ENCODE measurements at regions of chr1 and their contacts with region 1.

Region 1: DNA sequence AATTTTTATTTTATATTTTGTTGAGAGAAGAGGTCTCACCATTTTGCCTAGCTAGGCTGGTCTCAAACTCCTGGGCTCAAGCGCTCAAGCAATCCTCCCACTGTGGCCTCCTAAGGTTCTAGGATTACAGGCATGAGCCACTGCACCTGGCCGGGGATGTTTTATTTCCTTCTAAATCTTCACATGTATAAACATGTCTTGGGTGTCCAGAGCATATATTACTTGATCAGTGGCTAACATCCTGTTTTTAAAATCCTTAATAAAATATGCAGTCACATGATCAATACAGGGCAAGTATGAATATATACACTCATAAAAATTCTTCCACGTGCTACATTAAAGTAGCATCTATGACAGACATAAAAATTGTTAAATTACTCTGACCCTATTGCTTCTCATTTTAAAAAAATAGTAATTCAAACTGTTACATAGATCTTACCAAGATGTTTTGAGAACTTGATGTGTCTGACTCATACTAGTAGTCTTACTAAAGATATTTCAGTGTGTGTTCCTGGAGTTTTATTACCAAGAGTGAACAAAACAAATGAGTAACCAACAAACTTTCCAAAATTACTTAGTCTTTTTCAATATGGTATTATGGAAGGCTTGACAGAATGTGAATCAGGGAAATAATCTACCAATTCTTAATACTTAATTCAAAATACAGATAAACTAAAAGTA is 222.5 kb downstream of the SLC45A1 start:
- DNase-seq: no peak
- ATAC-seq: peak; percentile 84
- H3K4me3 Mint-ChIP-seq: no peak overlapping the region
- H3K27ac Mint-ChIP-seq: peak overlapping the region; percentile 80
- H3K4me1 Mint-ChIP-seq: peaks cover 32% of the 10 kb centered on the region
- H3K27me3 Mint-ChIP-seq: no peaks in the 10 kb centered on the region

Region 2: DNA sequence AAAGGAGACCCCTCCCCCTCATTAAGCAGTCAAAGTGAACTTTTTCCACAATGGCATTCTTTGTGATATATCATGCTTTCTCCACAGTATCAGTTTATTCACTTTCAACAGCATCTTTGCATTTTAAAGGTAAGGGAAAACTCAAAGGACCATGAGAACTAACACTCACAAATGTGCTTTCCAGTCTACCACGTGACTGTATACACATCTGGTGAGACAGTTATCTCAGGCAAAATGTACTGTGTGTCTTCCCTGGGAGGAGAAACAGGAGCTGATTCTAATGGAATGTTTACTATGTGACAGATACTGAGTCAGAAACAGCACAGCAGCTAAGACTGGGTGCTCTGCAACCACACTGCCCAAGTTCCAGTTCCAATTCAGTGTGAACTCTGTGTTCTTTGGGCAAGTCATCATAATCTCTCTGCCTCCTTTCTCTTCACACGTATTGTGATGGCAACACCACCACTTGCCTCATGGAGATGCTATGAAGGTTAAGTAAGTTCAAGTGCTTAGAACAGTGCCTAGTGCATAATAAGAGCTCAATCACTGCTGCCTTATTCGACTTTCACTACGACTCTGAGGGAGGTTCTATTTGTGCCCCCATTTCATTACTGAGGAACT is 143.5 kb before region 1 on chr1:
- CTCF ChIA-PET with region 1: no interaction called
- POLR2A ChIA-PET with region 1: no interaction called
- intact Hi-C with region 1: loop called in 1 of 2 experiments (anchors 1 kb)
- DNase-seq: peak; percentile 68
- ATAC-seq: peak; percentile 84
- H3K4me3 Mint-ChIP-seq: peak overlapping the region; percentile 25
- H3K27ac Mint-ChIP-seq: peak overlapping the region; percentile 81
- H3K4me1 Mint-ChIP-seq: peaks cover 72% of the 10 kb centered on the region
- H3K27me3 Mint-ChIP-seq: no peaks in the 10 kb centered on the region

Region 3: GRCh38 chr1:8486047-8486446 is 54.4 kb before region 1 on chr1:
- CTCF ChIA-PET with region 1: no interaction called
- POLR2A ChIA-PET with region 1: no interaction called
- intact Hi-C with region 1: no loop called
- DNase-seq: no peak
- ATAC-seq: no peak
- H3K4me3 Mint-ChIP-seq: no peak overlapping the region
- H3K27ac Mint-ChIP-seq: no peak overlapping the region
- H3K4me1 Mint-ChIP-seq: peaks cover 3% of the 10 kb centered on the region
- H3K27me3 Mint-ChIP-seq: no peaks in the 10 kb centered on the region

Region 4: GRCh38 chr1:8497210-8497801 is 43.1 kb before region 1 on chr1:
- CTCF ChIA-PET with region 1: no interaction called
- POLR2A ChIA-PET with region 1: no interaction called
- intact Hi-C with region 1: loop called in 1 of 2 experiments (anchors 5 kb)
- DNase-seq: no peak
- ATAC-seq: no peak
- H3K4me3 Mint-ChIP-seq: no peak overlapping the region
- H3K27ac Mint-ChIP-seq: no peak overlapping the region
- H3K4me1 Mint-ChIP-seq: peaks cover 29% of the 10 kb centered on the region
- H3K27me3 Mint-ChIP-seq: no peaks in the 10 kb centered on the region

Region 5: GRCh38 chr1:8649027-8649426 is 108.6 kb after region 1 on chr1:
- CTCF ChIA-PET with region 1: no interaction called
- POLR2A ChIA-PET with region 1: no interaction called
- intact Hi-C with region 1: loop called in 1 of 2 experiments (anchors 2 kb)
- DNase-seq: peak; percentile 22
- ATAC-seq: peak; percentile 85
- H3K4me3 Mint-ChIP-seq: no peak overlapping the region
- H3K27ac Mint-ChIP-seq: peak overlapping the region; percentile 37
- H3K4me1 Mint-ChIP-seq: peaks cover 50% of the 10 kb centered on the region
- H3K27me3 Mint-ChIP-seq: no peaks in the 10 kb centered on the region

Region 6: DNA sequence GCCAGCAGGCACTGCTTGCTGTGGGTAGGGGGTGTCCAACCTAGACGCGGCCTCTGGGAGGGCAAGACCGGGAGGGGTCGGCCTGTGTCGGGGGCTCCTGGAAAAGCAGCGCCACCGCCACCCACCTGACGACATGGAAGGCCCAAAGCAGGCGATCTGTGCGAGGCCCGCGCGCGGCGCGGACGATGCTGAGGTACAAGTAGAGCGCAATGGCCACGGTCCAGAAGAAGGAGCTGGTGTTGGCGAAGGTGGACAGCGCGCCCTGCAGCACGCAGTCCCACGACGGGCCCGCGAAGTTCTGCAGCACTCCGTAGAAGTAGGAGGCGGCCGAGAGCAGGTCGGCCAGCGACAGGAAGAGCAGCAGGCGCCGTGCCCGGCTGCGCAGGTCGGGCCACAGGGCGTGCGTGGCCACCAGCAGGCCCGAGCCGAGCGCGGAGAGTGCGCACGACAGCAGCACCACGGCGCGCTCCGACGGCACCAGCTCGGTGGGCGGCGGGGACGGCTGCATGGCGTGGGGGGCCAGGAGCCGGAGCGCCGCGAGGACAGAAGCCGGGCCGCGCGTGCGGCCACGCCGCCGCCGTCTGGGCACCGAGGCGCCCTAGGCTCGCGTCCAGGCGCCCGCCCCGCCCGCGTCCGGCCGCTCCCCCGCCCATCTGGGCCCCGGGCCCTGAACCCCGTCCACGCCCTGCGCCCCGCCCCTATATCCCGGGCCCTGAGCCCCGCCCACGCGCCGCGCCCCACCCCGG is 588.3 kb after region 1 on chr1 and contains the start of gene GPR157:
- CTCF ChIA-PET with region 1: no interaction called
- POLR2A ChIA-PET with region 1: no interaction called
- intact Hi-C with region 1: loop called in 1 of 2 experiments (anchors 10 kb)
- DNase-seq: peak; percentile 93
- ATAC-seq: peak; percentile 84
- H3K4me3 Mint-ChIP-seq: peak within 1 kb of the TSS; percentile 83
- H3K27ac Mint-ChIP-seq: peak within 1 kb of the TSS; percentile 67
- H3K4me1 Mint-ChIP-seq: peaks cover 37% of the 10 kb centered on the region
- H3K27me3 Mint-ChIP-seq: no peaks in the 10 kb centered on the region
- total RNA-seq, gene GPR157: 2.7 to 3.6 TPM

Measured in activated CD4-positive, alpha-beta T cell treated with anti-CD3 and anti-CD28 coated beads for 36 hours (primary cell).